PC-3 (cell line): ENCODE measurements at regions of chr3 and their contacts with region 1.

Region 1: GRCh38 chr3:76834657-76835056 is 205.2 kb upstream of the ROBO2 start:
- DNase-seq: no peak
- ATAC-seq: no peak
- H3K4me3 ChIP-seq: no peak overlapping the region
- H3K27ac ChIP-seq: no peak overlapping the region
- H3K4me1 ChIP-seq: no peaks in the 10 kb centered on the region
- H3K27me3 ChIP-seq: no peaks in the 10 kb centered on the region; the same call in 1 of the 2 replicates
- CTCF ChIP-seq: no peak

Region 2: GRCh38 chr3:77063423-77063822 is 228.8 kb after region 1 on chr3:
- CTCF ChIA-PET with region 1: no interaction called
- POLR2A ChIA-PET with region 1: interaction called, 27 read pairs
- intact Hi-C with region 1: no loop called
- DNase-seq: no peak
- ATAC-seq: no peak
- H3K4me3 ChIP-seq: no peak overlapping the region
- H3K27ac ChIP-seq: no peak overlapping the region
- H3K4me1 ChIP-seq: no peaks in the 10 kb centered on the region
- H3K27me3 ChIP-seq: no peaks in the 10 kb centered on the region
- CTCF ChIP-seq: no peak